B cell (primary cell): ENCODE measurements at regions of chr11 and their contacts with region 1.

Region 1: GRCh38 chr11:75241036-75241905 is 697 bp downstream of the TPBGL start:
- DNase-seq: peak; percentile 90
- ATAC-seq: peak; percentile 97
- H3K4me3 ChIP-seq: peak overlapping the region in 3 of 5 experiments; percentile 46 to 60 (median 52)
- H3K4me3 Mint-ChIP-seq: peak overlapping the region; percentile 77
- H3K27ac ChIP-seq: no peak overlapping the region
- H3K27ac Mint-ChIP-seq: no peak overlapping the region
- H3K4me1 ChIP-seq: peaks cover 12 to 15% of the 10 kb centered on the region in 2 donors
- H3K4me1 Mint-ChIP-seq: peaks cover 7% of the 10 kb centered on the region
- H3K27me3 ChIP-seq: peaks cover 0 to 54% (median 26%) of the 10 kb centered on the region in 4 experiments
- H3K27me3 Mint-ChIP-seq: peaks cover 66% of the 10 kb centered on the region
- CTCF ChIP-seq: peak; percentile 80

Region 2: GRCh38 chr11:75142714-75143419 is 98.4 kb before region 1 on chr11:
- CTCF ChIA-PET with region 1: interaction called, 284 read pairs
- POLR2A ChIA-PET with region 1: interaction called, 3 read pairs
- intact Hi-C with region 1: loop called (anchors 1 kb)
- DNase-seq: peak; percentile 38
- ATAC-seq: peak; percentile 58
- H3K4me3 ChIP-seq: no peak overlapping the region
- H3K4me3 Mint-ChIP-seq: peak overlapping the region; percentile 8
- H3K27ac ChIP-seq: no peak overlapping the region
- H3K27ac Mint-ChIP-seq: no peak overlapping the region
- H3K4me1 ChIP-seq: peaks cover 8 to 19% of the 10 kb centered on the region in 2 donors
- H3K4me1 Mint-ChIP-seq: peaks cover 20% of the 10 kb centered on the region
- H3K27me3 ChIP-seq: peaks cover 0 to 3% (median 0%) of the 10 kb centered on the region in 4 experiments
- H3K27me3 Mint-ChIP-seq: peaks cover 19% of the 10 kb centered on the region
- CTCF ChIP-seq: no peak

Region 3: GRCh38 chr11:75182669-75183068 is 58.6 kb before region 1 on chr11:
- CTCF ChIA-PET with region 1: no interaction called
- POLR2A ChIA-PET with region 1: no interaction called
- intact Hi-C with region 1: no loop called
- DNase-seq: no peak
- ATAC-seq: no peak
- H3K4me3 ChIP-seq: no peak overlapping the region
- H3K4me3 Mint-ChIP-seq: no peak overlapping the region
- H3K27ac ChIP-seq: no peak overlapping the region
- H3K27ac Mint-ChIP-seq: no peak overlapping the region
- H3K4me1 ChIP-seq: no peaks in the 10 kb centered on the region
- H3K4me1 Mint-ChIP-seq: no peaks in the 10 kb centered on the region
- H3K27me3 ChIP-seq: peaks cover 0 to 8% (median 3%) of the 10 kb centered on the region in 4 experiments
- H3K27me3 Mint-ChIP-seq: peaks cover 17% of the 10 kb centered on the region
- CTCF ChIP-seq: no peak

Region 4: DNA sequence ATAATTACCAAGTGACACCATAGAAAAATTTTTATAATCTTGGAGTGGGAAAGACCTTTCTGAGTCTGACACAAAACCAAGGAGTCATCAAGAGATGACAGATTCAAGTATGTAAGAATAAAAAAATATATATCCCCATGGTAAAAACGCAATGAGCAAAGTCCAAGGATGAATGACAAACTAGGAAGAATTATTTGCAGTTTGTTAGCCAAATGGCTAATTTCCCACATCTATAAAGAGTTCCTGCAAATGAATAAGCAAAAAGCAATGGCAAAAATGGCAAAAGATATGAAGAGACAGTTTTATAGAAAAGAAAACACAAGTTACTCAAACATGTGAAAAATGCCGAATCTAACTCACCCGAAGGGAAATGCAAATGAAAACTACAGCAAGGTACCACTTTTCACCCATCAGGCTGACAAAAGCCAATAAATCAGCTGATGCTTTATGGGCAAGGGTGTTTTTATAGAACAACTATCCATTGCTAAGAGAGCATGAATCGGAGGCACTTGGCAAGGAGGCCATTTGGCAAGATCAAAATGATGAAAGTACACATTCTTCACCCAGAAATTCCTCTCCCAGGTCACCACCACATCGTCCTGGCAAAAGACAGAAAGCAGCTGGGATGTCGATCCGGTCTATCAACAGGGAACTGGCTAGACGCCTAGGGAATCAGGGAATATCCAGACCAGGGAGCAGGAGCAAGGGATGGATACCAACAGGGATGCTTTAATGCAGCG is 212.8 kb after region 1 on chr11:
- CTCF ChIA-PET with region 1: no interaction called
- POLR2A ChIA-PET with region 1: no interaction called
- intact Hi-C with region 1: no loop called
- DNase-seq: no peak
- ATAC-seq: no peak
- H3K4me3 ChIP-seq: no peak overlapping the region
- H3K4me3 Mint-ChIP-seq: no peak overlapping the region
- H3K27ac ChIP-seq: no peak overlapping the region
- H3K27ac Mint-ChIP-seq: no peak overlapping the region
- H3K4me1 ChIP-seq: no peaks in the 10 kb centered on the region
- H3K4me1 Mint-ChIP-seq: no peaks in the 10 kb centered on the region
- H3K27me3 ChIP-seq: peaks cover 0 to 3% (median 0%) of the 10 kb centered on the region in 4 experiments
- H3K27me3 Mint-ChIP-seq: no peaks in the 10 kb centered on the region
- CTCF ChIP-seq: no peak

Region 5: GRCh38 chr11:75492181-75492820 is 251.0 kb after region 1 on chr11:
- CTCF ChIA-PET with region 1: no interaction called
- POLR2A ChIA-PET with region 1: no interaction called
- intact Hi-C with region 1: no loop called
- DNase-seq: peak; percentile 58
- ATAC-seq: peak; percentile 63
- H3K4me3 ChIP-seq: no peak overlapping the region
- H3K4me3 Mint-ChIP-seq: peak overlapping the region; percentile 37
- H3K27ac ChIP-seq: no peak overlapping the region
- H3K27ac Mint-ChIP-seq: peak overlapping the region; percentile 6
- H3K4me1 ChIP-seq: peaks cover 8 to 11% of the 10 kb centered on the region in 2 donors
- H3K4me1 Mint-ChIP-seq: peaks cover 15% of the 10 kb centered on the region
- H3K27me3 ChIP-seq: no peaks in the 10 kb centered on the region
- H3K27me3 Mint-ChIP-seq: no peaks in the 10 kb centered on the region
- CTCF ChIP-seq: no peak